GM18951 (cell line): ENCODE measurements at regions of chr11 and their contacts with region 1.

Region 1: DNA sequence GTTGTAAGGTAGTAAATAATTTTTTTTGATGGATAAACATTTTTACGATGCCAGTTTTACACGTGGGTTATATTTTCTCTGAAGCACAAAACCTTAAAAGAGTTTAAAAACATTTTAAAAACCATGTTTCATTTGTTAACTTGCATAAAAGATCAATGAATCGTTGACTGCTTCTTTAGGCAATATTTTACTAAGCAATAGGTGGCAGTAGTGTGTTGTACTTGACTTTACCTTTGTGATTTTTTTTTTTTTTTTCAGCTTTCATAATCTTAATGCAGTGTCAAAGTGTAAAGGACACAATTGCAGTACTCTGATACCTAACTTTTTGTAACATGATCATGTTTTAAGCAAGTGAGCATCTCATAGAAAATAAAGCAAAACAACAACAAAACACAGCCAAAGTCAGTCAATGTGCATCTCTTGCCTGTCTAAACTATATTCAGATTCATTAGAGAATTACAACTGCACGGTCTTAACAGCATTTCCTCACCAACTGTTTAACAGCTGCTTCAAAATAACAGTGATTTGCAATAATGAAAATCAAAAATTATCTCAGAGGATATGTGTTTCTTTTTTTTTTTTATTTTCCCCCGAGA is 27.7 kb downstream of the DNAJC24 start:
- POLR2A ChIP-seq: no peak

Region 2: DNA sequence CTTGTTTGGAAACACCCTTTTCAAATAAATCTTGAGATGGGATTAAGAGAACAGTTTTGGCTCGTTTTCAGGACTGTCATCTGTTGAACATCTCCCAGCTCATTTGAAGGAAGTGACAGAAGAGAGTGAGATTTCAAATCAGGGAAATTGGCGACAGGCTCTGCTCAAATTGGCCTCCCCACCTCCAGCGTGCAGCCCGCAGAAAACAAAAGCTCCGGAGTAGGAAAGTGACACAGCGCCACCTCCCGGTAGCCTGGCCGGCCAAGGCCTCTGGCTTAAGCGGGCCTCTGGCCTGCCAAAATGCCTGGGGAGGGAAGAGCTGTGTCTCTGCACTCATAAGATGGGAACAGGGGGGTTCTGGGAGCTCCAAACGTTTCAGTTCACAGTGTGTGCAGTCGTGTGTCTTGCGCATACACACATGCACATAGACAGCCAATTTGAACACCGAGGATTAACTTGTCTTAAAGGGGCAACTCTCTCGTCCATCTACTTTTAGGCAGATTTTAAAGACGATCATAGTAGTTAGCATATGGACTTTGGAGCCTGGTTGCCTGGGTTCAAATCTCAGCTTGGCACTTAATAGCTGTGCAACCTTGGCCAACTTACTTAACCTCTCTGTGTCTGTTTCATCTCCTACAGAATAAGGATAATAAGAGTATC is 560.9 kb after region 1 on chr11:
- in situ Hi-C with region 1: loop called (anchors 25 kb)
- POLR2A ChIP-seq: no peak